ENCODE measurements at regions of chr14 and their contacts with region 1.

Region 1: GRCh38 chr14:69580009-69580577 is 5.4 kb upstream of the CCDC177 start:
- DNase-seq: no peak
- H3K4me3 Mint-ChIP-seq: no peak overlapping the region
- H3K27ac Mint-ChIP-seq: no peak overlapping the region
- H3K4me1 Mint-ChIP-seq: peaks cover 4% of the 10 kb centered on the region
- H3K27me3 Mint-ChIP-seq: peaks cover 37% of the 10 kb centered on the region

Region 2: GRCh38 chr14:69373104-69373503 is 207.0 kb before region 1 on chr14:
- intact Hi-C with region 1: no loop called
- DNase-seq: no peak
- H3K4me3 Mint-ChIP-seq: no peak overlapping the region
- H3K27ac Mint-ChIP-seq: peak overlapping the region; percentile 46
- H3K4me1 Mint-ChIP-seq: peaks cover 10% of the 10 kb centered on the region
- H3K27me3 Mint-ChIP-seq: no peaks in the 10 kb centered on the region

Region 3: GRCh38 chr14:69726761-69727511 is 146.8 kb after region 1 on chr14:
- intact Hi-C with region 1: loop called (anchors 1 kb)
- DNase-seq: peak; percentile 73
- H3K4me3 Mint-ChIP-seq: peak overlapping the region; percentile 52
- H3K27ac Mint-ChIP-seq: peak overlapping the region; percentile 20
- H3K4me1 Mint-ChIP-seq: peaks cover 24% of the 10 kb centered on the region
- H3K27me3 Mint-ChIP-seq: peaks cover 5% of the 10 kb centered on the region